Ovary (tissue), 10 donors: ENCODE measurements at regions of chr22 and their contacts with region 1.

Region 1: DNA sequence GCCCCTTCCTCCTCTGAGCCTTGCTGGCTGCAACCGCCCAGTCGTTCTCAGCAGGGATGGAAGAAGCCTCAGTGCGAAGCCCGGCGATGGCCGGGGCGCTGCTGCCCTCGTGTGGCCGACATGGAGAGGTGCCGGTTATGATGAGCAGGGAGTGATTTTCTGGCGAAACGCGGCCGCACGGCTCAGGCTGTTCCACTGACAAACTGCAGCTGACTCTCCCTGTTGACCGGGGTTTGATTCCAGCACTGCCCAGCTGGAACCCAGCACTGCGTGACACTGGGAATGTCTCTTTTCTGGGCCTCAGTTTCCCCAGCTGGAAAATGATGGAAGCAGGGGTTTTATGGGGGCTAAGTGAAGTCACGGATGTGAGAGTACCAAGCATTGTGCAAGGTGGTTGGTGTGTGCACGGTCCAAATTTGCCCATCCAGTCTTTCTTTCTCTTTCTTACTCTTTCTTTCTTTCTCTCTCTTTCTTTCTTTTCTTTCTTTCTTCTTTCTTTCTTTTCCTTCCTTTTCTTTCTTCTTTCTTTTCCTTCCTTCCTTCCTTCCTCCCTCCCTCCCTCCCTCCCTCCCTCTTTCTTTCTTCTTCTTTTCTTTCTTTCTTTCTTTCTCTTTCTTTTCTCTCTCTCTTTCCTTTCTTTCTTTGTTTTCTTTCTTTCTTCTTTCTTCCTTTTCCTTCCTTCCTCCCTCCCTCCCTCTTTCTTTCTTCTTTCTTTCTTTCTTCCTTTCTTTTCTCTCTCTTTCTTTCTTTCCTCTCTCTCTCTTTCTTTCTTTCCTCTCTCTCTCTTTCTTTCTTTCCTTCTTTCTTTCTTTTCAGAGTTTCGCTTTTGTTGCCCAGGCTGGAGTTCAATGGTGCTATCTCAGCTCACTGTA is 25.8 kb upstream of the MPPED1 start:
- DNase-seq: peak; percentile 80 to 93 (median 84)
- H3K4me3 ChIP-seq: no peak overlapping the region
- H3K27ac ChIP-seq: no peak overlapping the region
- H3K4me1 ChIP-seq: peaks cover 5% of the 10 kb centered on the region
- H3K27me3 ChIP-seq: no peaks in the 10 kb centered on the region
- CTCF ChIP-seq: peak; percentile 92 to 96 (median 93)
- EP300 ChIP-seq: no peak
- POLR2A ChIP-seq: no peak

Region 2: DNA sequence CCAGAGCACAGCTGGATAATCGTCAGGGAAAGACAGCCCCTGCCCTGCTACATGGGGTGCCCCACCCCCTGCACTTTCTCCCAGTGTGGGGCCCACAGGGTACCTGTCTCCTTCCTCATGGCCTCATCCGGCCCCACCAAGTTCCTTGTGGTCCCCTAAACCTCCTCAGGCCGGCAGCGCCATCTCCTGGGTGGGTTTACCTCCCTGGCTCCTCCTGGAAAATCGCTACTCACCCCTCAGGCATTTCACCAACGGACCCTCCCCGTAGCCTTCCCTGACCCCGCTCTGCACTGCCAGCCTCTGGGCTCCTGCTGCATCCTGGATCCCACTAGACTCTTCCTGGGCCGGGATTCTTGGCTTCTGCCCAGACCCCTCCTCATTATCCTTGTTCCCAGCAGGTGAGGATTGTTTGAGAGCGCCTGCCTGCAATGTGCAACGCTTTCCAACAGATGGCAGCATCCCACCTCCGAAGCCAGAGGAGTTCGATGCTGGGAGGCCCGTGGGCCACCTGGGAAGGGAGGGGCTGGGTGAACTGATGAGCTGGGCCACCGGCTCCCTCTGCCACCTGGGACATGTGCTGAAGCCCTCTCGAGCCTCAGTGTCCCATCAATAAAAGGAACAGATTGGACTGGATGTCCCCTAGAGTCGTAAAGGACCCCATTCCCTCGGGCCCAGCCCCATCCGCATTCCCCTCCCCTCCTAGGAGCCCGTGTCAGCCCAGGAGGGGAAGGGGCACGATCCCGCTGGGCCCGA is 154.9 kb before region 1 on chr22:
- intact Hi-C with region 1: loop called in 3 of 4 experiments (anchors 2 to 5 kb)
- DNase-seq: peak; percentile 65 to 83 (median 80)
- H3K4me3 ChIP-seq: no peak overlapping the region
- H3K27ac ChIP-seq: no peak overlapping the region
- H3K4me1 ChIP-seq: peaks cover 6% of the 10 kb centered on the region
- H3K27me3 ChIP-seq: no peaks in the 10 kb centered on the region
- CTCF ChIP-seq: peak; percentile 80 to 94 (median 90)
- EP300 ChIP-seq: no peak
- POLR2A ChIP-seq: no peak

Region 3: GRCh38 chr22:43273902-43274484 is 112.0 kb before region 1 on chr22:
- intact Hi-C with region 1: loop called (anchors 2 to 10 kb)
- DNase-seq: peak in 2 of 5 donors; percentile 55 to 62
- H3K4me3 ChIP-seq: no peak overlapping the region
- H3K27ac ChIP-seq: peak overlapping the region in 1 of 2 donors; percentile 74
- H3K4me1 ChIP-seq: peaks cover 19% of the 10 kb centered on the region
- H3K27me3 ChIP-seq: no peaks in the 10 kb centered on the region
- CTCF ChIP-seq: peak; percentile 23 to 71 (median 68)
- EP300 ChIP-seq: no peak
- POLR2A ChIP-seq: no peak

Region 4: GRCh38 chr22:43346521-43346929 is 39.5 kb before region 1 on chr22:
- intact Hi-C with region 1: no loop called
- DNase-seq: peak; percentile 44 to 78 (median 69)
- H3K4me3 ChIP-seq: no peak overlapping the region
- H3K27ac ChIP-seq: no peak overlapping the region
- H3K4me1 ChIP-seq: no peaks in the 10 kb centered on the region
- H3K27me3 ChIP-seq: no peaks in the 10 kb centered on the region
- CTCF ChIP-seq: peak in 2 of 3 donors; percentile 40 to 42
- EP300 ChIP-seq: no peak
- POLR2A ChIP-seq: no peak

Region 5: GRCh38 chr22:43884600-43885325 is 498.8 kb after region 1 on chr22:
- intact Hi-C with region 1: loop called in 3 of 4 experiments (anchors 5 to 10 kb)
- DNase-seq: peak; percentile 63 to 86 (median 77)
- H3K4me3 ChIP-seq: no peak overlapping the region
- H3K27ac ChIP-seq: no peak overlapping the region
- H3K4me1 ChIP-seq: no peaks in the 10 kb centered on the region
- H3K27me3 ChIP-seq: no peaks in the 10 kb centered on the region
- CTCF ChIP-seq: peak; percentile 49 to 62 (median 55)
- EP300 ChIP-seq: no peak
- POLR2A ChIP-seq: no peak